Activated B cell treated with CpG ODN at 0.5 μM for 24 hours (primary cell): ENCODE measurements at regions of chr7 and their contacts with region 1.

Region 1: DNA sequence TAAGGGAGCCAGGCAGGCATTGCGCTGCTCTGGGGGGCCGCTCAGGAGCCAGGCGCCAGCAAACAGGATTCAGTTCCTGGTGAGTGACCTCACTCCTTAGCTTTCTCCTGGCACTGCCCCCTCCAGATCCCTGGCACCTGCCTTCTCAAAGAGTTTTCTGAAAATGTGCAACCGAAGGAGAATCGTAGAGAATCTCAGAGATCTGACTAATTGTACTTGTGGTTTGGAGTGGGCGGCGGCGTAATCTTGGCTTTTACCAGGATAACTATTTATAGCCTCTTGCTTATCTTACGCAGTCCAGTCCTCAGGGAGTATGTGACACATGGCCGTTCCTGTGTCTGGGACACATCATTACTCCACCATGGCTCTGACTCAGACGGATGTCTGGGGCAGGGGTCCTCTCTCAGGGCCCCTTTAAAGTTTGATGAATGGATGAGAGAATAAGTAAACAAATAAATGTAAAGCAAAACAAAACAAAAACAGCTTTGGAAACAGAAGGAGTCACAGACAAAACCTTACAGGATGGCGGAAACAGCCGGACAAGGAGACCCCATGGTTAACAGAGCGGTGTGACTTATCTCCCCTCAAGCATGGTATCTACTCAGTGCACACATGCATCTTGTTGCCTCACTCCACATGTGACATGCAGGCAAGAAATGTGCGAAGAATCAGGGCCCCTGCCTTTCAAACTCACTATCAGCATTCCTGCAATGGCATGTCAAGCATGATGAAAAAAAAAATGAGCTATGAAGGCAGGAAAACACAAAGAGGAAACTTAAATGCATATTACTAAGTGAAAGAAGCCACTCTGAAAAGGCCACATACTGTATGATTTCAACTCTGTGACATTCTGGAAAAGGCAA is 99.7 kb downstream of the TNS3 start:
- DNase-seq: no peak
- ATAC-seq: peak; percentile 74
- H3K4me3 Mint-ChIP-seq: peak overlapping the region; percentile 75
- H3K27ac Mint-ChIP-seq: peak overlapping the region; percentile 91
- H3K4me1 Mint-ChIP-seq: peaks cover 59% of the 10 kb centered on the region
- H3K27me3 Mint-ChIP-seq: no peaks in the 10 kb centered on the region
- CTCF ChIP-seq: no peak

Region 2: GRCh38 chr7:47444379-47445057 is 37.7 kb before region 1 on chr7:
- CTCF ChIA-PET with region 1: interaction called, 4 read pairs
- POLR2A ChIA-PET with region 1: no interaction called
- intact Hi-C with region 1: loop called (anchors 2 kb)
- DNase-seq: no peak
- ATAC-seq: peak; percentile 72
- H3K4me3 Mint-ChIP-seq: no peak overlapping the region
- H3K27ac Mint-ChIP-seq: no peak overlapping the region
- H3K4me1 Mint-ChIP-seq: peaks cover 22% of the 10 kb centered on the region
- H3K27me3 Mint-ChIP-seq: no peaks in the 10 kb centered on the region
- CTCF ChIP-seq: no peak

Region 3: DNA sequence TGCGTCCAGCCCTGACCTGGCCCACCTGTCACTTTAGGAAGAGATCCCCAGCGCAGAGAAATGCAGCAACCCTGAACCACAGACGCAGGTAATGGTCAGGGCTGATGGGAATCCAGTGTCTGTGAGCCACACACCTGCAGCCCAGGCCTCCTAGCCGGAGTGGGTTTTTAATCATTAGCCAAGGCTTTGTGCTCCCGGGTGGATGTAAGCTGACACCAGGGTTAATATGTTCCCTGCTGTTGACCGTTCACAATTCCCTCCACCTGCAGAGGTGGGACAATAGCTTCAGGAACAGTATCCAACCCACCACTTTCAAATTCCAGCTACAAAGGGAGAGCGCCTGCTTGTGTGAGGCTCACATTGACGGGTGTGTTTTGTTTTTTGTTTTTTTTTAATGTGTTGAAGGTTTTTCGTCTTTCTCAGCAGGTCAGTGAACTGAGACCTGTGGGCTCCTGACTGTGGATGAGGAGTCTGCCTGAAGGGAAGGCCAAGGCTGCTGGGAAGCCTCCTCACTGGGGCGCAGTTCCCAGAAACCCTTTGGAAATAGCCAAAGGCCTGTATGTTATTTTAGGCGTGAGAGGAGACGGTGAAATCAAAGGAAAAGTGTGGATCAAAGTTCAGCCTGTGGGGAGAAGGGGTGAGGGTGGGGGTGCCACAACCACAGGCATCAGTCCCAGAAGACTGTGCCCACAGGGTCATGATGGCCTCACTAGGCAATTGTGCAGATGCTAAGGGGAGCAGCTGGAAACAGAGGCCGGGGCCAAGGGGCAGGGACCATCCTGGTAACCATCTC is 11.5 kb before region 1 on chr7:
- CTCF ChIA-PET with region 1: no interaction called
- POLR2A ChIA-PET with region 1: no interaction called
- intact Hi-C with region 1: no loop called
- DNase-seq: no peak
- ATAC-seq: no peak
- H3K4me3 Mint-ChIP-seq: no peak overlapping the region
- H3K27ac Mint-ChIP-seq: no peak overlapping the region
- H3K4me1 Mint-ChIP-seq: peaks cover 3% of the 10 kb centered on the region
- H3K27me3 Mint-ChIP-seq: no peaks in the 10 kb centered on the region
- CTCF ChIP-seq: no peak

Region 4: DNA sequence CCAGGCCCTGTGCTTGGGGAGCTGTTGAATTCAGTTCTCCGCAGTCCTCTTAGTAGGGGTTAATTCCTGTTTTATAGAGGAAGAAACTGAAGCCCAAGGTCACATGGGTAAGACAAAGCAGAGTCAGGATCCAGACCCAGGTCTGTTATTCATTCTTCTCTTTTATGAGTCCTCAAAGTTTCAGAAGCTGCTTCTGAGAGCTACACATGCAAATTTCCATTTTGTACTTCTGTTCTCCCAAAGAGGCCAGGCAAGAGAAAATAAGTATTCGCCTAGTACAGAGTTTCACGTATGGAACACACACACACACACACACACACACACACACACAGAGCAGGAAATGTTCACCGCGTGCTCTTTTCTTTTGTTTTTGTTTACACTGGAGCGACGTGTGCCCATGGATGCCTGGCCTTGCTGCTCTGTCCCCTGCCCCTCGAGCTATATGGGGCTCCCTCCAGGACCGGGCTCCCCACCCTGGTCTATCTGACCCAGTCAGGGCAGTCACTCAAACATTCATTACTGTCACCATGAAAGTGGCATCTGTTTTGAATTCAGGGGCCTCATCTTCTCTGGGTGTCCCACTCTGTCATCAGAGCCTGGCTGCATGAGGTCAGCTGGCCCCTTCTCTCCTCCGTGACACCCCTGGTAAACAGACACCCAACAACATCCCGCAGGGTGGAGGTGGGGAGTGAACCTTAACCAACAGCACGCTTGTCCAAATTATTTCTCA is 15.3 kb after region 1 on chr7:
- CTCF ChIA-PET with region 1: interaction called, 5 read pairs
- POLR2A ChIA-PET with region 1: interaction called, 32 read pairs
- intact Hi-C with region 1: loop called (anchors 1 kb)
- DNase-seq: no peak
- ATAC-seq: peak; percentile 81
- H3K4me3 Mint-ChIP-seq: peak overlapping the region; percentile 64
- H3K27ac Mint-ChIP-seq: peak overlapping the region; percentile 87
- H3K4me1 Mint-ChIP-seq: peaks cover 70% of the 10 kb centered on the region
- H3K27me3 Mint-ChIP-seq: no peaks in the 10 kb centered on the region
- CTCF ChIP-seq: no peak

Region 5: DNA sequence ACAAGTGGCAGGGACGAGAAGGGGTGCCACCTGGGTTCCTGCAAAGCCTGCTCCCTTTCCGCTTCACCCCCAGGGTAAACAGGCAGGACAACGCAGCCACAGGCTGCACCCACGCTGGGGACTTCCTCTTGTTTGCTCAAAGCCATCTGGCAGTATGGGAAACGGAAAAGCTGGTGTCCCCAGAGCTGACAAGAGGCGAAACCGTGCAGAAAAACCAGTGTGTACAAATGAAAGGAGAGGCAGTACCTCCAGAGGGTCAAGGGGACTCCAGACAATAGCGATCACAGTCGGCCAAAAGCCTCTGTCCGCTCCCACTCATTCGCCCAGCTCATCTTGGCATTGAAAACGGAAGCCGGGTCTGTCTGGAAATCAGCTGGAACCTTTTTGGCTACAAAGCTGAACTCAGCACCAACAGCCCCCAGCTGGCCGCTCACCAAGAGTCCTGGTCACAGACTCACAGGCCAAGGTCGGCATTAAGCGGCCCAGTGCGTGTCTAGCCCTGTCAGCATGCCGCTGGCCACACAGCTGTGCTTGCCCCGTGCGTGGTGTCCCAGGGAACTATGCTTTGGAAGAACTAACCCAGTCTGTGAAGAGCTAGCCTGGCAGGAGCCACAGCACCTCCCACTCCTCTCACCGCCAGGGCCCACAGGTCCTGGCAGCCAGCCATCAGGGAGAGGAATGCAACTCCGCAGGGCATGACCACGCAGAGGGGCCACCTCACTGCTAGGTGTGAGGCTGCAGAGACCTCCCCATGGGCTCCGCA is 89.3 kb after region 1 on chr7:
- CTCF ChIA-PET with region 1: interaction called, 8 read pairs
- POLR2A ChIA-PET with region 1: interaction called, 7 read pairs
- intact Hi-C with region 1: loop called (anchors 1 kb)
- DNase-seq: no peak
- ATAC-seq: peak; percentile 32
- H3K4me3 Mint-ChIP-seq: peak overlapping the region; percentile 75
- H3K27ac Mint-ChIP-seq: peak overlapping the region; percentile 87
- H3K4me1 Mint-ChIP-seq: peaks cover 90% of the 10 kb centered on the region
- H3K27me3 Mint-ChIP-seq: no peaks in the 10 kb centered on the region
- CTCF ChIP-seq: no peak

Region 6: GRCh38 chr7:47724335-47724982 is 242.2 kb after region 1 on chr7:
- CTCF ChIA-PET with region 1: no interaction called
- POLR2A ChIA-PET with region 1: no interaction called
- intact Hi-C with region 1: loop called (anchors 5 kb)
- DNase-seq: no peak
- ATAC-seq: no peak
- H3K4me3 Mint-ChIP-seq: peak overlapping the region; percentile 66
- H3K27ac Mint-ChIP-seq: peak overlapping the region; percentile 72
- H3K4me1 Mint-ChIP-seq: peaks cover 80% of the 10 kb centered on the region
- H3K27me3 Mint-ChIP-seq: no peaks in the 10 kb centered on the region
- CTCF ChIP-seq: no peak

Region 7: GRCh38 chr7:47932016-47932415 is 449.8 kb after region 1 on chr7:
- CTCF ChIA-PET with region 1: no interaction called
- POLR2A ChIA-PET with region 1: no interaction called
- intact Hi-C with region 1: loop called (anchors 2 kb)
- DNase-seq: no peak
- ATAC-seq: no peak
- H3K4me3 Mint-ChIP-seq: no peak overlapping the region
- H3K27ac Mint-ChIP-seq: no peak overlapping the region
- H3K4me1 Mint-ChIP-seq: peaks cover 35% of the 10 kb centered on the region
- H3K27me3 Mint-ChIP-seq: peaks cover 2% of the 10 kb centered on the region
- CTCF ChIP-seq: no peak